B cell (primary cell): ENCODE measurements at regions of chr2 and their contacts with region 1.

Region 1: DNA sequence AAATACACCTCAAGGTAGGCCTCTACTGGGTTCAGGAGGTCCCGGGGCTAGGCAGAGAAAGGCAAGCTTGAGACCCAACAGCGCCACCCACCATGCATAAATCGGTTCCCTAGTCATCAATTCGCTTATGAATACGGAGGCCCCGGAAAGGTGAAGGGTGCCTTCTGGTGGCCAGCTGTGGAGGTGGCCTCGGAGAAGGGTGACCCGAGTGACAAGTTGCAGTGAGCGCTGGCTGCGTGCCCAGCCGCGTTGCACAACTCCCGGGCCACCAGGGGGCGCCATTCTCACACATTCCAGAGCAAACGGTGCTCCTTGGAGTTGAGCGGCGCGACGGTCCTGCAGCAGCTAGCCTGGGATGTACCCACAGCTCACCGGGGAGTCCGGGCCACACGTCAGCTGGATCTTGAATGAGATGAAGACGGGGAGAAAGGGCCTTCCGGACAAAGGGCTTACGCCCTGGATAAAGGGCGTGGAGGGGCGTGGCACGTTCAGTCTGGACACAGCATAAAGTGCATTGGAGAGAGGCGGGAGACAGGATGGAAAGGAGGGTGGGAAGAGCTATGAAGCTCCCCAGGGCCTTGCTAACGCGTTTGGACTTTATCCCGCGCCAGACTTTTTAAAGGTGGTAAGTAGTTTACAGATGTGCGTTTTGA is 20.4 kb downstream of the TMSB10 start:
- DNase-seq: peak; percentile 97
- ATAC-seq: peak; percentile 86
- H3K4me3 ChIP-seq: peak overlapping the region; percentile 48 to 83 (median 74)
- H3K4me3 Mint-ChIP-seq: peak overlapping the region; percentile 96
- H3K27ac ChIP-seq: peak overlapping the region in 1 of 2 donors; percentile 35
- H3K27ac Mint-ChIP-seq: peak overlapping the region; percentile 91
- H3K4me1 ChIP-seq: peaks cover 26 to 49% of the 10 kb centered on the region in 2 donors
- H3K4me1 Mint-ChIP-seq: peaks cover 50% of the 10 kb centered on the region
- H3K27me3 ChIP-seq: no peaks in the 10 kb centered on the region
- H3K27me3 Mint-ChIP-seq: no peaks in the 10 kb centered on the region
- CTCF ChIP-seq: peak; percentile 100

Region 2: DNA sequence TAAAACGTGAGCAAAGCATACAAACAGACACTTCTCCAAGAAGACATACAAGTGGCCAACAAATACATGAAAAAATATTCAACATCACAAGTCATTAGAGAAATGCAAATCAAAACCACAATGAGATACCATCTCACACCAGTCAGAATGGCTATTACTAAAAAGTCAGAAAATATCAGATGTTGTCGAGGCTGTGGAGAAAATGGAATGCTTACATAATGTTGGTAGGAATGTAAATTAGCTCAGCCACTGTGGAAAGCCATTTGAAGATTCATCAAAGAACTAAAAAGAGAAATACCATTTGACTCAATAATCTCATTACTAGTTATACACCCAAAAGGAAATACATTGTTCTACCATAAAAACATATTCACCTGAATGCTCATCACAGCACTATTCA is 1292.4 kb before region 1 on chr2:
- CTCF ChIA-PET with region 1: no interaction called
- POLR2A ChIA-PET with region 1: no interaction called
- intact Hi-C with region 1: no loop called
- DNase-seq: no peak
- ATAC-seq: no peak
- H3K4me3 ChIP-seq: no peak overlapping the region
- H3K4me3 Mint-ChIP-seq: no peak overlapping the region
- H3K27ac ChIP-seq: no peak overlapping the region
- H3K27ac Mint-ChIP-seq: no peak overlapping the region
- H3K4me1 ChIP-seq: no peaks in the 10 kb centered on the region
- H3K4me1 Mint-ChIP-seq: no peaks in the 10 kb centered on the region
- H3K27me3 ChIP-seq: no peaks in the 10 kb centered on the region
- H3K27me3 Mint-ChIP-seq: no peaks in the 10 kb centered on the region
- CTCF ChIP-seq: no peak

Region 3: DNA sequence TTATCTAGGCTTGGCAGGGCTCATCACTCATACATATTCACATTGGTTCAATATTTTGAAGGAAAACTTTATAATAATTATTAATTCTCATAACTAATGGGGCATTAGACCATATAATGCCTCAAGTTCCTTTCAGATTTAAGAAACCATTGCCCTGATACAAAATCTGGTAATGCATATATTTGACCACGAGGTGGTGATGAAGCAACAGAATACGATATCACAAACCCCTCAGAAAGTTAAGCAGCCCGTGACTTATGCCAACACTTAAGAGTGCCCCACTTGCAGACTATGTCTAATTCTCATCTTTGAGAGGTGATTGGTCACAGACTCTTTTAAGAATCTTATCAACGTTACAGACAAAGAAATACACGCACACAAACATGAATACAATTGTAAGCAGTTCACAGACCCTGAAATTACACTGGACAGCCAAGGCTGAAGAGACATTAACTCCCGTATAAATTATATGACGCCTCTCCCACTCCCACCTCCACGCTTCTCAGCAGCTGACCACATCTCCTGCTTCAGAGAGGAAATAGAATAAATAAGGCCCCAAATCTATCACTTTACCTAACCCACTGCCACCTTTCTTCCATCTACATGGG is 430.2 kb before region 1 on chr2:
- CTCF ChIA-PET with region 1: interaction called, 37 read pairs
- POLR2A ChIA-PET with region 1: no interaction called
- intact Hi-C with region 1: loop called (anchors 1 kb)
- DNase-seq: peak; percentile 81
- ATAC-seq: peak; percentile 89
- H3K4me3 ChIP-seq: no peak overlapping the region
- H3K4me3 Mint-ChIP-seq: no peak overlapping the region
- H3K27ac ChIP-seq: no peak overlapping the region
- H3K27ac Mint-ChIP-seq: no peak overlapping the region
- H3K4me1 ChIP-seq: no peaks in the 10 kb centered on the region
- H3K4me1 Mint-ChIP-seq: no peaks in the 10 kb centered on the region
- H3K27me3 ChIP-seq: no peaks in the 10 kb centered on the region
- H3K27me3 Mint-ChIP-seq: no peaks in the 10 kb centered on the region
- CTCF ChIP-seq: peak; percentile 83

Region 4: GRCh38 chr2:84865181-84865783 is 60.6 kb before region 1 on chr2:
- CTCF ChIA-PET with region 1: interaction called, 36 read pairs
- POLR2A ChIA-PET with region 1: no interaction called
- intact Hi-C with region 1: no loop called
- DNase-seq: peak; percentile 51
- ATAC-seq: peak; percentile 49
- H3K4me3 ChIP-seq: no peak overlapping the region
- H3K4me3 Mint-ChIP-seq: no peak overlapping the region
- H3K27ac ChIP-seq: no peak overlapping the region
- H3K27ac Mint-ChIP-seq: no peak overlapping the region
- H3K4me1 ChIP-seq: peaks cover 3 to 9% of the 10 kb centered on the region in 2 donors
- H3K4me1 Mint-ChIP-seq: peaks cover 8% of the 10 kb centered on the region
- H3K27me3 ChIP-seq: no peaks in the 10 kb centered on the region
- H3K27me3 Mint-ChIP-seq: no peaks in the 10 kb centered on the region
- CTCF ChIP-seq: peak; percentile 66

Region 5: GRCh38 chr2:84894758-84895520 is 30.9 kb before region 1 on chr2:
- CTCF ChIA-PET with region 1: interaction called, 316 read pairs
- POLR2A ChIA-PET with region 1: interaction called, 10 read pairs
- intact Hi-C with region 1: no loop called
- DNase-seq: peak; percentile 67
- ATAC-seq: peak; percentile 61
- H3K4me3 ChIP-seq: peak overlapping the region in 4 of 5 experiments; percentile 3 to 46 (median 32)
- H3K4me3 Mint-ChIP-seq: peak overlapping the region; percentile 20
- H3K27ac ChIP-seq: peak overlapping the region; percentile 78 to 91
- H3K27ac Mint-ChIP-seq: peak overlapping the region; percentile 85
- H3K4me1 ChIP-seq: peaks cover 38 to 42% of the 10 kb centered on the region in 2 donors
- H3K4me1 Mint-ChIP-seq: peaks cover 49% of the 10 kb centered on the region
- H3K27me3 ChIP-seq: no peaks in the 10 kb centered on the region
- H3K27me3 Mint-ChIP-seq: no peaks in the 10 kb centered on the region
- CTCF ChIP-seq: no peak

Region 6: GRCh38 chr2:84939426-84940087 is 13.7 kb after region 1 on chr2:
- CTCF ChIA-PET with region 1: interaction called, 168 read pairs
- POLR2A ChIA-PET with region 1: interaction called, 9 read pairs
- intact Hi-C with region 1: loop called (anchors 1 kb)
- DNase-seq: peak; percentile 93
- ATAC-seq: peak; percentile 96
- H3K4me3 ChIP-seq: peak overlapping the region in 4 of 5 experiments; percentile 15 to 55 (median 38)
- H3K4me3 Mint-ChIP-seq: peak overlapping the region; percentile 76
- H3K27ac ChIP-seq: peak overlapping the region; percentile 88 to 90
- H3K27ac Mint-ChIP-seq: peak overlapping the region; percentile 90
- H3K4me1 ChIP-seq: peaks cover 53 to 65% of the 10 kb centered on the region in 2 donors
- H3K4me1 Mint-ChIP-seq: peaks cover 50% of the 10 kb centered on the region
- H3K27me3 ChIP-seq: no peaks in the 10 kb centered on the region
- H3K27me3 Mint-ChIP-seq: no peaks in the 10 kb centered on the region
- CTCF ChIP-seq: no peak

Region 7: GRCh38 chr2:84970868-84971509 is 45.1 kb after region 1 on chr2 and contains the start of gene KCMF1:
- CTCF ChIA-PET with region 1: interaction called, 69 read pairs
- POLR2A ChIA-PET with region 1: interaction called, 11 read pairs
- intact Hi-C with region 1: loop called (anchors 2 kb)
- DNase-seq: no peak
- ATAC-seq: peak; percentile 56
- H3K4me3 ChIP-seq: peak within 1 kb of the TSS; percentile 85 to 97 (median 92)
- H3K4me3 Mint-ChIP-seq: peak within 1 kb of the TSS; percentile 98
- H3K27ac ChIP-seq: peak within 1 kb of the TSS; percentile 74 to 96
- H3K27ac Mint-ChIP-seq: peak within 1 kb of the TSS; percentile 97
- H3K4me1 ChIP-seq: peaks cover 42 to 48% of the 10 kb centered on the region in 2 donors
- H3K4me1 Mint-ChIP-seq: peaks cover 56% of the 10 kb centered on the region
- H3K27me3 ChIP-seq: no peaks in the 10 kb centered on the region
- H3K27me3 Mint-ChIP-seq: no peaks in the 10 kb centered on the region
- CTCF ChIP-seq: no peak
- total RNA-seq, gene KCMF1: 73.1 and 81.5 TPM in 2 replicates

Region 8: DNA sequence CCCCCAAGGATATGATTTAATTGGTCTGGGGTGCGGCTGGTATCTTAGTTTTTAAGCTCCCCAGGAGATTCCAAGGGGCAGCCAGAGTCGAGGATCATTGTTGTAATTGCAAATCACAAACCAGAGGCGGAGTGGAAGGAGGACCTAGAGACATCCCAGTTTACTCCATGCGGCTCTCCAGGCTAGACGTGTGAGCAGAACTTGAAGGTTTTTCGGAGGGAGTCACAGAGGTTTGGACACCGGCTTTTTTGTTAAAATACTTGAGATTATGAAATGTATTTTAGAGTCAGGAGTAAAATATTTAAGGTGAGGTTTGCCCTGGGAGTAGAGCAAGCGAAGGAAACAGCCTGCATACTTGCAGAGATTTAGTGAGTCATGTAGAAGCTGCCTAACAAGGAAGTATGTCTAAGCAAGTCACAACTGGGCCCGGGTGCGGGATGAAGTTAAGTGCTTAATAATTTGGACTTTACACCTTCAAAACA is 362.4 kb after region 1 on chr2:
- CTCF ChIA-PET with region 1: interaction called, 14 read pairs
- POLR2A ChIA-PET with region 1: no interaction called
- intact Hi-C with region 1: no loop called
- DNase-seq: no peak
- ATAC-seq: no peak
- H3K4me3 ChIP-seq: no peak overlapping the region
- H3K4me3 Mint-ChIP-seq: no peak overlapping the region
- H3K27ac ChIP-seq: no peak overlapping the region
- H3K27ac Mint-ChIP-seq: no peak overlapping the region
- H3K4me1 ChIP-seq: no peaks in the 10 kb centered on the region
- H3K4me1 Mint-ChIP-seq: peaks cover 9% of the 10 kb centered on the region
- H3K27me3 ChIP-seq: no peaks in the 10 kb centered on the region
- H3K27me3 Mint-ChIP-seq: peaks cover 8% of the 10 kb centered on the region
- CTCF ChIP-seq: no peak

Region 9: DNA sequence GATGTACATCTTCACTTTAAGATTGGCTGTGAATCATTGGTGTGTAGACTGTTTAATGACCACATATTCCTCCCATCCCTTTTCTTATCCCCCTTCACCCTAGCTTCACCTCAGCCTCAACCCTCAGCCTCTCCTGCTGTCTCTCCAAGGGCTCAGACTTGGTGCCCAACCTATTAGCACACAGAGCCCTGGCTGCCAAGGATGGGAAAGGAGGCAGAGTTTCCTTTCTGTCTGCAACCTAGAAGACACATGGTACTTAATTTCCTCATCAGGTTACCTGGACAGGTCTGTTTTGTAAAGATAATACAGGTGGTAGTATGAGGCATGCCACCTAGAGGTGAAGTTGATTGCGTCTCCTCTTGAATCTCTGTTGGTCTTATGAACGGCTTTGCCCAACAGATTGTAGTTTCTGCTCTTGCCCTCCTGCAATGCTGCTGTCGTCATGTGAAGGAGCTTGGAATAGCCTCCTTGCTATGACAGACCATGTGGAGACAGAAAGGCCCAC is 1749.7 kb after region 1 on chr2:
- CTCF ChIA-PET with region 1: no interaction called
- POLR2A ChIA-PET with region 1: no interaction called
- intact Hi-C with region 1: no loop called
- DNase-seq: peak; percentile 12
- ATAC-seq: no peak
- H3K4me3 ChIP-seq: no peak overlapping the region
- H3K4me3 Mint-ChIP-seq: no peak overlapping the region
- H3K27ac ChIP-seq: no peak overlapping the region
- H3K27ac Mint-ChIP-seq: no peak overlapping the region
- H3K4me1 ChIP-seq: no peaks in the 10 kb centered on the region
- H3K4me1 Mint-ChIP-seq: no peaks in the 10 kb centered on the region
- H3K27me3 ChIP-seq: no peaks in the 10 kb centered on the region
- H3K27me3 Mint-ChIP-seq: no peaks in the 10 kb centered on the region
- CTCF ChIP-seq: no peak